ENCODE measurements at regions of chr2 and their contacts with region 1.

Region 1: GRCh38 chr2:27281855-27282559 is at the start of gene TRIM54:
- DNase-seq: no peak
- H3K4me3 ChIP-seq: no peak within 1 kb of the TSS
- H3K27ac ChIP-seq: no peak within 1 kb of the TSS
- H3K4me1 ChIP-seq: peaks cover 0 to 23% of the 10 kb centered on the region in 2 experiments; a peak in 3 of 4 replicates
- H3K27me3 ChIP-seq: peaks cover 12% of the 10 kb centered on the region; the same call in 1 of the 2 replicates
- CTCF ChIP-seq: no peak
- EP300 ChIP-seq: no peak
- RAD21 ChIP-seq: no peak
- polyA plus RNA-seq, gene TRIM54: 0.28 and 0.36 TPM in 2 replicates

Region 2: DNA sequence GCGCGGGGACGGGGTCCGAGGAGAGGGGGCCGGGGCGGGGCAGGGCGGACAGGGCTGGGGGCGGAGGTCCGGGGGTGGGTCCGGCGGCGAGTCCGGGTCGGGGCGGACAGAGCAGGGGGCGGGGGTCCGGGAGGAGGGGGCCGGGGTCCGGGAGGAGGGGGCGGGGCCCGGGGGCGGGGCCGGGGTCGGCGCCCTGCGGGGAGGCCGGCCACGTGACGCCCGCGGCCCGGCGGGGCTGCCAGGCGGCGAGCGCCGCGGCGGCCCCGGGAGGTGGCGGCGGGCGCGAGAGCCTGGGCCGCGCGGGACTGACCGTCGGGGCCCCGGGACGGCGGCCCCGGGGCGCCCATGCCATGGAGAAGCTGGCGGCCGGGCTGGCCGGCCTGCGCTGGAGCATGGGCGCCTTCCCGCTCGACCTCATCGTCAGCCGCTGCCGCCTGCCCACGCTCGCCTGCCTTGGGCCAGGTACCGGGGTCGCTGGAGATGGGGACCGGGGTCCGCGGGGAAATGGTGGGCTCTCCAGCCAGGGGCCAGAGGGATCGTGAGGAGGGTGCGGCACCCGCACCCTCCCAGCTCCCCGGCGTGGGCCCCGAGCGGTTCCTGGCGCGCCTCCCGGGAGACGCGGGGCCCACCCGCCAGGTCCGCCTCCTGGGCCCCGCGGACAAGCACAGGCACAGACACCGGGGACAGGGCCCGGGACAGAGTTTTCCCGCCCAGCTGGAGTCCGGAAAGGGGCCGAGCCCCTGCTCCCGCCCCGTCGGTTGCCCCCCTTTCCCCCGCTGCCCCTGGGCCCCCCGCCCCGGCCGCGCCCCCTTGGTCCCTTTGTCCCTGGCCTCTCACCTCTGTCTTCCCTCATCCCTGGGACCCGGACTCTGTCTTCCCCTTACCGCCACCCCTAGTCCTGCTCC is 1108.9 kb before region 1 on chr2 and contains the start of gene GAREM2:
- CTCF ChIA-PET with region 1: no interaction called
- POLR2A ChIA-PET with region 1: no interaction called
- DNase-seq: peak; percentile 99
- H3K4me3 ChIP-seq: peak within 1 kb of the TSS; percentile 42 to 54; a peak in 3 of 4 replicates
- H3K27ac ChIP-seq: no peak within 1 kb of the TSS
- H3K4me1 ChIP-seq: peaks cover 0 to 12% of the 10 kb centered on the region in 2 experiments; a peak in 1 of 4 replicates
- H3K27me3 ChIP-seq: no peaks in the 10 kb centered on the region
- CTCF ChIP-seq: no peak
- EP300 ChIP-seq: no peak
- RAD21 ChIP-seq: no peak
- polyA plus RNA-seq, gene GAREM2: 1.5 and 3.7 TPM in 2 replicates

Region 3: DNA sequence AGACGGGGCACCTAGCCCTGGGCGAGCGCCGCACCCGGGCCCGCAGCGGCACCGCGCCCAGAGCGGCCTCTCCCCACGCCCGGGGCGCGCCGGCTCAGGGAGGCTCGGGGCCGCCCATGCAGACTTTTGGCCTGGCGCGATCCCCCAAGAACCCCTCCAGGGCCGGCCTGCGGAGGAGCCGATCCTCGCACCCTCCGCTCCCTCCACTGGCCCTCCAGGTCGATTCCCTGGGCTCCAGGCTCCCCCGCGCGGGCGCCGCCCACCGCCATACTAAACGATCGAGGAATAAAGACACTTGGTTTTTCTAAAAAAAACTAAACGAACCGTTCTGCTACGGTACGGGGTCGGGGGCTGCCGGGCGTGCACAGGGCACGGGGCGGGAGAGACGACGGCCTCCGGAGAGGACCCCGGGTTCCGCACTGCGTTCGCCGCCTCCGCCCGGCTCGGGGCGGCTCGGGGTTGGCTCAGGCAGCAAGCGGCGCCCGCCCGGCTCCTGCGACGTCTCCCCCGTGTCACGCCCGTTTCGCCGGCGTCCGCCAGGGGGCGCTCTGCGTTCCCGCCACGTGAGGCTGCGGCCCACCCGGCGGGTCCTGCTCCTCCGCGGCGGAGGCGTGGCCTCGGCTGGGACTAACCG is 195.8 kb before region 1 on chr2:
- CTCF ChIA-PET with region 1: interaction called, 28 read pairs
- POLR2A ChIA-PET with region 1: interaction called, 4 read pairs
- DNase-seq: peak; percentile 100
- H3K4me3 ChIP-seq: peak overlapping the region; percentile 65 to 75
- H3K27ac ChIP-seq: peak overlapping the region; percentile 37 to 89; a peak in 3 of 4 replicates
- H3K4me1 ChIP-seq: peaks cover 9 to 46% of the 10 kb centered on the region in 2 experiments; a peak in 3 of 4 replicates
- H3K27me3 ChIP-seq: no peaks in the 10 kb centered on the region
- CTCF ChIP-seq: peak; percentile 69
- EP300 ChIP-seq: peak in 1 of 2 experiments; percentile 42; a peak in 1 of 4 replicates
- RAD21 ChIP-seq: peak; percentile 52

Region 4: GRCh38 chr2:27162151-27163121 is 119.6 kb before region 1 on chr2:
- CTCF ChIA-PET with region 1: interaction called, 21 read pairs
- POLR2A ChIA-PET with region 1: no interaction called
- DNase-seq: no peak
- H3K4me3 ChIP-seq: no peak overlapping the region
- H3K27ac ChIP-seq: no peak overlapping the region
- H3K4me1 ChIP-seq: no peaks in the 10 kb centered on the region
- H3K27me3 ChIP-seq: no peaks in the 10 kb centered on the region
- CTCF ChIP-seq: no peak
- EP300 ChIP-seq: no peak
- RAD21 ChIP-seq: no peak

Region 5: GRCh38 chr2:27211829-27212627 is 70.0 kb before region 1 on chr2 and contains the starts of genes ATRAID and SLC5A6:
- CTCF ChIA-PET with region 1: interaction called, 12 read pairs
- POLR2A ChIA-PET with region 1: no interaction called
- DNase-seq: peak; percentile 99
- H3K4me3 ChIP-seq: peak within 1 kb of the TSS; percentile 84 to 86
- H3K27ac ChIP-seq: peak within 1 kb of the TSS; percentile 89 to 99
- H3K4me1 ChIP-seq: peaks cover 5 to 26% of the 10 kb centered on the region in 2 experiments; a peak in 3 of 4 replicates
- H3K27me3 ChIP-seq: no peaks in the 10 kb centered on the region
- CTCF ChIP-seq: no peak
- EP300 ChIP-seq: no peak
- RAD21 ChIP-seq: no peak
- polyA plus RNA-seq, gene ATRAID: 289 and 366 TPM in 2 replicates
- polyA plus RNA-seq, gene SLC5A6: 75.7 and 85.0 TPM in 2 replicates

Region 6: GRCh38 chr2:27249891-27250651 is 31.9 kb before region 1 on chr2:
- CTCF ChIA-PET with region 1: interaction called, 87 read pairs
- POLR2A ChIA-PET with region 1: interaction called, 3 read pairs
- DNase-seq: peak; percentile 87
- H3K4me3 ChIP-seq: no peak overlapping the region; a peak in 1 of 4 replicates
- H3K27ac ChIP-seq: no peak overlapping the region
- H3K4me1 ChIP-seq: peaks cover 5 to 12% of the 10 kb centered on the region in 2 experiments; a peak in 3 of 4 replicates
- H3K27me3 ChIP-seq: no peaks in the 10 kb centered on the region
- CTCF ChIP-seq: peak; percentile 66
- EP300 ChIP-seq: no peak
- RAD21 ChIP-seq: peak; percentile 74

Region 7: GRCh38 chr2:27308359-27308881 is 26.4 kb after region 1 on chr2 and contains the start of gene UCN:
- CTCF ChIA-PET with region 1: interaction called, 284 read pairs
- POLR2A ChIA-PET with region 1: no interaction called
- DNase-seq: peak; percentile 82
- H3K4me3 ChIP-seq: no peak within 1 kb of the TSS; a peak in 1 of 4 replicates
- H3K27ac ChIP-seq: no peak within 1 kb of the TSS
- H3K4me1 ChIP-seq: peaks cover 0 to 18% of the 10 kb centered on the region in 2 experiments; a peak in 1 of 4 replicates
- H3K27me3 ChIP-seq: peaks cover 15% of the 10 kb centered on the region; the same call in 1 of the 2 replicates
- CTCF ChIP-seq: no peak
- EP300 ChIP-seq: no peak
- RAD21 ChIP-seq: no peak
- polyA plus RNA-seq, gene UCN: 2.8 and 2.9 TPM in 2 replicates

Measured in SK-N-SH (cell line).